Endothelial cell of umbilical vein (primary cell): ENCODE measurements at regions of chr7 and their contacts with region 1.

Region 1: GRCh38 chr7:133753513-133753912 is 373.6 kb upstream of the LRGUK start:
- DNase-seq: no peak
- H3K4me3 ChIP-seq: no peak overlapping the region
- H3K27ac ChIP-seq: no peak overlapping the region
- H3K4me1 ChIP-seq: no peaks in the 10 kb centered on the region
- H3K27me3 ChIP-seq: no peaks in the 10 kb centered on the region
- CTCF ChIP-seq: no peak
- POLR2A ChIP-seq: no peak

Region 2: DNA sequence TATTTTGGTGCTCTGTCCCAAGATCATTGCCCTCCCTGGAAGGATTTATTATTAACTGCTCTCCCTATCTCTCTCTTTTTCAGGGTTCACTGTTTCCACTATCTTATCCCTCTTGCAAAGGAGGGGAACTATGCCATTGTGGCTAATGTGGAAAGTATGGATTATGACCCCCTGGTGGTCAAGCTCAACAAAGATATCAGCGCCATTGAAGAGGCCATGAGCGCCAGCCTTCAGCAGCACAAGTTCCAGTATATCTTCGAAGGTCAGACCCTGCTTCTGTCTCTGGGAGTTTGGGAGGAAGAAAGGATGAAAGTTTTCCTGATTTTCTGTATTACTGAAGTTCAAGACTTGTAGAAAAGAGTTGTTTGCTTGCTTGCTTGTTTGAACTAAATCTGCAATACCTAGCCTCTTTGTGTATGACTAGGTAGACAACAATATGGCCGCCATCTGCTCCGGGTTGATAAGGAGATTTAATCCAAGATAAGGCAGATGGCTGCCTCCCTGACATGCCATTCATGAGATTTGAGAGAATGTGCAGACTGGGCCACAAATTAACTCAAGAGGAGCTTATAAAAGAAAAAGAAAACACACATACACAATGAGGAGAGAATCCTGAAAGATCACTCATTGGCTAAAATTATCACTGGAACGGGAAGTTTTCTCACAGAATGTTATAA is 251.5 kb after region 1 on chr7:
- CTCF ChIA-PET with region 1: no interaction called
- POLR2A ChIA-PET with region 1: no interaction called
- dilution Hi-C with region 1: no loop called
- intact Hi-C with region 1: loop called (anchors 10 kb)
- DNase-seq: no peak
- H3K4me3 ChIP-seq: no peak overlapping the region
- H3K27ac ChIP-seq: no peak overlapping the region
- H3K4me1 ChIP-seq: no peaks in the 10 kb centered on the region
- H3K27me3 ChIP-seq: no peaks in the 10 kb centered on the region
- CTCF ChIP-seq: no peak
- POLR2A ChIP-seq: no peak